Activated CD8-positive, alpha-beta T cell treated with anti-CD3 and anti-CD28 coated beads, Interleukin-2, amount 10 ng/mL, durations not matched to agents 7 days and 5 days (primary cell): ENCODE measurements at regions of chr7 and their contacts with region 1.

Region 1: GRCh38 chr7:131107337-131108211 is 220.1 kb upstream of the MKLN1 start:
- DNase-seq: peak; percentile 85
- ATAC-seq: peak; percentile 40
- H3K4me3 Mint-ChIP-seq: peak overlapping the region; percentile 96
- H3K27ac Mint-ChIP-seq: peak overlapping the region; percentile 97
- H3K4me1 Mint-ChIP-seq: peaks cover 65% of the 10 kb centered on the region
- H3K27me3 Mint-ChIP-seq: no peaks in the 10 kb centered on the region

Region 2: GRCh38 chr7:131068604-131069021 is 39.0 kb before region 1 on chr7:
- CTCF ChIA-PET with region 1: interaction called, 14 read pairs
- POLR2A ChIA-PET with region 1: interaction called, 11 read pairs
- DNase-seq: no peak
- ATAC-seq: no peak
- H3K4me3 Mint-ChIP-seq: no peak overlapping the region
- H3K27ac Mint-ChIP-seq: no peak overlapping the region
- H3K4me1 Mint-ChIP-seq: peaks cover 20% of the 10 kb centered on the region
- H3K27me3 Mint-ChIP-seq: no peaks in the 10 kb centered on the region

Region 3: GRCh38 chr7:131096267-131096927 is 11.2 kb before region 1 on chr7:
- CTCF ChIA-PET with region 1: interaction called, 10 read pairs
- POLR2A ChIA-PET with region 1: interaction called, 3 read pairs
- DNase-seq: no peak
- ATAC-seq: no peak
- H3K4me3 Mint-ChIP-seq: no peak overlapping the region
- H3K27ac Mint-ChIP-seq: no peak overlapping the region
- H3K4me1 Mint-ChIP-seq: peaks cover 23% of the 10 kb centered on the region
- H3K27me3 Mint-ChIP-seq: no peaks in the 10 kb centered on the region

Region 4: GRCh38 chr7:131188367-131189339 is 81.1 kb after region 1 on chr7:
- CTCF ChIA-PET with region 1: interaction called, 7 read pairs
- POLR2A ChIA-PET with region 1: interaction called, 18 read pairs
- DNase-seq: peak; percentile 69
- ATAC-seq: peak; percentile 84
- H3K4me3 Mint-ChIP-seq: peak overlapping the region; percentile 29
- H3K27ac Mint-ChIP-seq: peak overlapping the region; percentile 88
- H3K4me1 Mint-ChIP-seq: peaks cover 44% of the 10 kb centered on the region
- H3K27me3 Mint-ChIP-seq: no peaks in the 10 kb centered on the region

Region 5: GRCh38 chr7:131231381-131232220 is 124.0 kb after region 1 on chr7:
- CTCF ChIA-PET with region 1: interaction called, 7 read pairs
- POLR2A ChIA-PET with region 1: interaction called, 26 read pairs
- DNase-seq: peak; percentile 76
- ATAC-seq: peak; percentile 77
- H3K4me3 Mint-ChIP-seq: peak overlapping the region; percentile 69
- H3K27ac Mint-ChIP-seq: peak overlapping the region; percentile 89
- H3K4me1 Mint-ChIP-seq: peaks cover 58% of the 10 kb centered on the region
- H3K27me3 Mint-ChIP-seq: peaks cover 3% of the 10 kb centered on the region

Region 6: GRCh38 chr7:131327626-131328376 is 220.2 kb after region 1 on chr7 and contains the start of gene MKLN1:
- CTCF ChIA-PET with region 1: interaction called, 4 read pairs
- POLR2A ChIA-PET with region 1: interaction called, 21 read pairs
- DNase-seq: peak; percentile 92
- ATAC-seq: peak; percentile 95
- H3K4me3 Mint-ChIP-seq: peak within 1 kb of the TSS; percentile 98
- H3K27ac Mint-ChIP-seq: peak within 1 kb of the TSS; percentile 96
- H3K4me1 Mint-ChIP-seq: peaks cover 39% of the 10 kb centered on the region
- H3K27me3 Mint-ChIP-seq: no peaks in the 10 kb centered on the region
- total RNA-seq, gene MKLN1: 31.6 to 34.0 TPM